CD8-positive, alpha-beta T cell (primary cell): ENCODE measurements at regions of chr2 and their contacts with region 1.

Region 1: DNA sequence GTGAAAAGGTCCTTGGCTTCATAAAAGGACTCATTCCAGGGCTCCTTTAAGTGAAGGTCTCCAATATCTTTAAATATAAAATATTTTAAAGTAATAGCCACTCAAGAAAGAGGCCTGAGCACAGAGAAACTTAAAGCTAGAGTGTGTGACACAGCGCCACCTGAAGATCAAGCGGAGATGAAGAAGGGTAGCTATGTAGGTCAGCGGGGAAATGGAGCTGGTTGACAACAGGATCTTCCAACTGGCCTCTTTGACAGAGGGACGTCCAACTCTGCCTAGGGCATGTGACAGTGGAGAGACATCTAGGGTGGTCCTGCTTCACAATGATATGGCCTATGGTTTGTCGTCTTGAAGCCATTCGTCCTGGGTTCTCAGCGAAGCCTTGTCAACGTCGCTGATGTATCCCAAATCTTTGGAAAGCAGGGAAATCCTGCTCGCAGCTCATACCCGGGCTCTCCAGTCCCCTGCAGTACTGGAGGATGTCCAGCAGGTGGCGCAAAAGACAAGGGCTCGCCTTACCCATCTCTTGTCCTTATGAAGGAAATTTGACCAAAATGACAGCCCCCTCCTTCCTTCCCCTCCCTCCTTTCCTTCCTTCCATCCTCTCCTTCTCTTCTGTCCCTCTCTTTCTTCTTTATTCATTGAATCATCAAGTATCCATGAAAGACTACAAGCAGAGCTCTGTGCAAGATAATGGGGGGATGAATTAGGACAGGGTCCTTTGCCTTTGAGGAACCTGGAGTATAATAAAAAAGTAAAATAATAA is 59.6 kb downstream of the LONRF2 start:
- DNase-seq: peak; percentile 16 to 73 (median 54)
- ATAC-seq: peak; percentile 70
- H3K4me3 ChIP-seq: no peak overlapping the region
- H3K4me3 Mint-ChIP-seq: no peak overlapping the region
- H3K27ac ChIP-seq: no peak overlapping the region
- H3K27ac Mint-ChIP-seq: no peak overlapping the region
- H3K4me1 ChIP-seq: no peaks in the 10 kb centered on the region
- H3K4me1 Mint-ChIP-seq: peaks cover 2% of the 10 kb centered on the region
- H3K27me3 ChIP-seq: no peaks in the 10 kb centered on the region
- H3K27me3 Mint-ChIP-seq: no peaks in the 10 kb centered on the region
- CTCF ChIP-seq: peak; percentile 91

Region 2: GRCh38 chr2:100272841-100273329 is 10.1 kb after region 1 on chr2:
- CTCF ChIA-PET with region 1: interaction called, 53 read pairs
- POLR2A ChIA-PET with region 1: no interaction called
- intact Hi-C with region 1: no loop called
- DNase-seq: no peak
- ATAC-seq: no peak
- H3K4me3 ChIP-seq: no peak overlapping the region
- H3K4me3 Mint-ChIP-seq: no peak overlapping the region
- H3K27ac ChIP-seq: no peak overlapping the region
- H3K27ac Mint-ChIP-seq: no peak overlapping the region
- H3K4me1 ChIP-seq: no peaks in the 10 kb centered on the region
- H3K4me1 Mint-ChIP-seq: no peaks in the 10 kb centered on the region
- H3K27me3 ChIP-seq: no peaks in the 10 kb centered on the region
- H3K27me3 Mint-ChIP-seq: no peaks in the 10 kb centered on the region
- CTCF ChIP-seq: no peak